ENCODE measurements at regions of chr10 and their contacts with region 1.

Region 1: GRCh38 chr10:28179006-28179742 is 123.7 kb downstream of the MPP7 start:
- DNase-seq: peak in 5 of 14 experiments; percentile 8 to 78 (median 71)
- ATAC-seq: peak; percentile 75
- H3K4me3 ChIP-seq: peak overlapping the region; percentile 50
- H3K4me3 Mint-ChIP-seq: peak overlapping the region; percentile 89
- H3K27ac ChIP-seq: peak overlapping the region in 1 of 2 donors; percentile 15
- H3K27ac Mint-ChIP-seq: peak overlapping the region; percentile 87
- H3K4me1 ChIP-seq: peaks cover 9% of the 10 kb centered on the region
- H3K4me1 Mint-ChIP-seq: peaks cover 55% of the 10 kb centered on the region
- H3K27me3 ChIP-seq: no peaks in the 10 kb centered on the region
- H3K27me3 Mint-ChIP-seq: no peaks in the 10 kb centered on the region
- CTCF ChIP-seq: peak; percentile 90

Region 2: GRCh38 chr10:27742195-27743011 is 436.8 kb before region 1 on chr10:
- CTCF ChIA-PET with region 1: interaction called, 3 read pairs
- POLR2A ChIA-PET with region 1: interaction called, 3 read pairs
- intact Hi-C with region 1: loop called (anchors 2 to 5 kb)
- DNase-seq: peak; percentile 58 to 90 (median 70)
- ATAC-seq: peak; percentile 89
- H3K4me3 ChIP-seq: peak overlapping the region; percentile 54
- H3K4me3 Mint-ChIP-seq: peak overlapping the region; percentile 91
- H3K27ac ChIP-seq: no peak overlapping the region
- H3K27ac Mint-ChIP-seq: no peak overlapping the region
- H3K4me1 ChIP-seq: peaks cover 59% of the 10 kb centered on the region
- H3K4me1 Mint-ChIP-seq: peaks cover 47% of the 10 kb centered on the region
- H3K27me3 ChIP-seq: peaks cover 55 to 72% of the 10 kb centered on the region in 2 experiments
- H3K27me3 Mint-ChIP-seq: peaks cover 81% of the 10 kb centered on the region
- CTCF ChIP-seq: peak; percentile 74

Region 3: DNA sequence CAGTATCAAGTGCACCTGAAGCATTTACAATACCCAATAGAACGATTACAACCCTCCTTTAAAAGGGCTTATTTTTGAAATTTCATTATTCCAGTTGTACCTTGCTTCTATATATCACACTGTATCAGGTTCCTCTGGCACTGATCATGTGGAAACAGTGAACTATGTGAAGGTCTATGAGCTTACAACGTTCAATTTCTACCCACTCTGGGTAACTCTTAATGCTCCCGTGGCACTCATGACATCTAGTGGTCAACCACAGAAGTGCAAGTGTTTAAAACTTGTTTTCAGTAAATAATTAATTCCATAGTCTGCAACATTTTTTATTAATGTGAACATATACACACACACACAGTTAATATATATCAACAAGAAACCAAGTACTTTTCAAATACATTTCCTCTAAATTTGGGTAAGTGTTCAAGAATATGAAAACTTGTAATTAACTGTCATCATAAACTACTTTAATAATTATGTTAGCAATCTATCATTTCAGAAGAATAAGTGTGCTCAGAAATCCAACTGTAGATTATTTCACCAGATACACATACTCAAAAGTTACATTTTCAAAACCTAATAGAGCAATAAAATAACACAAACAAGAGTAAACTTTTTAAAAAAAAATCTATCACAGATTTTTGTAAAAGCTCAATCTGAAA is 62.7 kb after region 1 on chr10:
- CTCF ChIA-PET with region 1: interaction called, 14 read pairs
- POLR2A ChIA-PET with region 1: no interaction called
- intact Hi-C with region 1: no loop called
- DNase-seq: peak in 8 of 14 experiments; percentile 7 to 74 (median 36)
- ATAC-seq: peak; percentile 78
- H3K4me3 ChIP-seq: no peak overlapping the region
- H3K4me3 Mint-ChIP-seq: no peak overlapping the region
- H3K27ac ChIP-seq: no peak overlapping the region
- H3K27ac Mint-ChIP-seq: no peak overlapping the region
- H3K4me1 ChIP-seq: peaks cover 3% of the 10 kb centered on the region
- H3K4me1 Mint-ChIP-seq: peaks cover 45% of the 10 kb centered on the region
- H3K27me3 ChIP-seq: no peaks in the 10 kb centered on the region
- H3K27me3 Mint-ChIP-seq: no peaks in the 10 kb centered on the region
- CTCF ChIP-seq: peak; percentile 98